ENCODE measurements at regions of chr13 and their contacts with region 1.

Region 1: GRCh38 chr13:95479731-95480130 is 72.8 kb upstream of the CLDN10 start:
- DNase-seq: no peak
- H3K4me3 ChIP-seq: no peak overlapping the region
- H3K27ac ChIP-seq: no peak overlapping the region
- H3K4me1 ChIP-seq: peaks cover 0 to 7% (median 2%) of the 10 kb centered on the region in 4 donors
- H3K27me3 ChIP-seq: no peaks in the 10 kb centered on the region
- CTCF ChIP-seq: no peak
- EP300 ChIP-seq: no peak
- POLR2A ChIP-seq: no peak

Region 2: GRCh38 chr13:94435604-94436226 is 1044.0 kb before region 1 on chr13:
- intact Hi-C with region 1: loop called (anchors 5 kb)
- DNase-seq: no peak
- H3K4me3 ChIP-seq: no peak overlapping the region
- H3K27ac ChIP-seq: no peak overlapping the region
- H3K4me1 ChIP-seq: no peaks in the 10 kb centered on the region
- H3K27me3 ChIP-seq: no peaks in the 10 kb centered on the region
- CTCF ChIP-seq: peak; percentile 14 to 57 (median 48)
- EP300 ChIP-seq: no peak
- POLR2A ChIP-seq: no peak

Region 3: DNA sequence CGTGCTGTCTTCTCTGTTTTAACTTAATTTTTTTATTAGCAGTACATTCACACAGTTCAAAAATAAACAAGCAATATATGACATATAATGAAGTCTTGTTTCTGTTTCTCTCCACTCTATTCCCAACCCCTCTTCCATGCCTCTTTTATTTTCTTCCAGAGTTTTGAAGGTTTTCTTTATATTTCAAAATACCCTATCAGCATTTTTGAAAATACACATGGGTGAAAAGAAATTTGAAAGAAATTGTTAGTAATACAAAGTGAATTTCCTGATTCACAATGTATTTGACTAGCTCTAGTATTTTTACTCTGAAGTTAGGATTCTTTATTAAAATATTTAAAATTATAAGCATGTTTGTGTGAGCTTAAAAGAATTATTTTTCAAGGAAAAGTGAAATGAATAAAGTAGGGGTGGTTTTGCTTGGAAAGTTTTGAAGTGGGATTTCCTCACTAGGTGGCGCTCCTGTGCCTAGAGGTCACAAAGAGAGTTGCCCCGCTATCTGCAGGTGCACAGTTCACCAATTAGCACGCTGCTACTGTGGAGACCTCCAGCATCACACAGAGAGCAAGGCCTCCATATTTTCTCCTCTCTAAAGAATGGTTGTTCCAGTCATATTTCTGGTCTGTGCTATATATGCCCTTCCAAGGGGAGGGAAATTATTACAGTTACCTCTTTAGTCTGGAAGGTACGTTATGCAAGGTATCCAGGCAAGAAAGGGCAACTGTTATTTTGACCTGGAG is 805.0 kb before region 1 on chr13:
- intact Hi-C with region 1: loop called (anchors 2 kb)
- DNase-seq: no peak
- H3K4me3 ChIP-seq: no peak overlapping the region
- H3K27ac ChIP-seq: no peak overlapping the region
- H3K4me1 ChIP-seq: no peaks in the 10 kb centered on the region
- H3K27me3 ChIP-seq: no peaks in the 10 kb centered on the region
- CTCF ChIP-seq: peak in 2 of 4 experiments; percentile 22 to 37
- EP300 ChIP-seq: no peak
- POLR2A ChIP-seq: no peak

Region 4: GRCh38 chr13:95039415-95039814 is 440.3 kb before region 1 on chr13:
- intact Hi-C with region 1: no loop called
- DNase-seq: no peak
- H3K4me3 ChIP-seq: no peak overlapping the region
- H3K27ac ChIP-seq: no peak overlapping the region
- H3K4me1 ChIP-seq: no peaks in the 10 kb centered on the region
- H3K27me3 ChIP-seq: no peaks in the 10 kb centered on the region
- CTCF ChIP-seq: no peak
- EP300 ChIP-seq: no peak
- POLR2A ChIP-seq: no peak

Region 5: GRCh38 chr13:95191821-95192563 is 287.7 kb before region 1 on chr13:
- intact Hi-C with region 1: loop called (anchors 2 kb)
- DNase-seq: peak; percentile 87
- H3K4me3 ChIP-seq: no peak overlapping the region
- H3K27ac ChIP-seq: no peak overlapping the region
- H3K4me1 ChIP-seq: no peaks in the 10 kb centered on the region
- H3K27me3 ChIP-seq: no peaks in the 10 kb centered on the region
- CTCF ChIP-seq: peak; percentile 57 to 78 (median 71)
- EP300 ChIP-seq: no peak
- POLR2A ChIP-seq: no peak

Region 6: GRCh38 chr13:95301183-95301967 is 178.4 kb before region 1 on chr13 and contains the start of gene ABCC4:
- intact Hi-C with region 1: loop called (anchors 10 kb)
- DNase-seq: peak; percentile 88
- H3K4me3 ChIP-seq: peak within 1 kb of the TSS; percentile 62 to 96 (median 87)
- H3K27ac ChIP-seq: peak within 1 kb of the TSS; percentile 71 to 85 (median 83)
- H3K4me1 ChIP-seq: peaks cover 0 to 44% (median 23%) of the 10 kb centered on the region in 4 donors
- H3K27me3 ChIP-seq: no peaks in the 10 kb centered on the region
- CTCF ChIP-seq: no peak
- EP300 ChIP-seq: no peak
- POLR2A ChIP-seq: no peak
- total RNA-seq, gene ABCC4: 24.3 to 56.3 (median 43.1) TPM

Region 7: GRCh38 chr13:95403828-95404522 is 75.8 kb before region 1 on chr13:
- intact Hi-C with region 1: loop called (anchors 5 kb)
- DNase-seq: peak; percentile 91
- H3K4me3 ChIP-seq: peak overlapping the region in 3 of 4 donors; percentile 26 to 39 (median 35)
- H3K27ac ChIP-seq: no peak overlapping the region
- H3K4me1 ChIP-seq: peaks cover 0 to 9% (median 6%) of the 10 kb centered on the region in 4 donors
- H3K27me3 ChIP-seq: no peaks in the 10 kb centered on the region
- CTCF ChIP-seq: peak; percentile 87 to 94 (median 94)
- EP300 ChIP-seq: no peak
- POLR2A ChIP-seq: no peak

Region 8: DNA sequence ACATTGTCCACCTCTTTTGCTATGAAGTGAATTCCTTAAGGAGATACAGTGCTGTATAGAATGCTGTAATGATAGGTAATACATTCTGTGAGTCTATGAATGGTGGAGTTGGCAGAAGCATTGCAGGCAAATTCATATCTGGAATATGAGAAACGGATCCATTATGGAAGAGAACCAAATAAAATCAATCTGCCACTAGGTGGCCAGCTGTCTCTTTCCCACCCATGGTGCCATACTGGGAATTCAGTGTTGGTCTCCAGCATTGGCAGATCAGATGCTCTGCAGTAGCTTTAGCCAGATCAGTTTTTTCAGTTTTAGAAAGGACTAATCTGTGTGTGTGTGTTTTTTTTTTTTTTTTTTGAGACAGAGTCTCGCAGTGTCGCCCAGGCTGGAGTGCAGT is 224.8 kb after region 1 on chr13:
- intact Hi-C with region 1: no loop called
- DNase-seq: no peak
- H3K4me3 ChIP-seq: no peak overlapping the region
- H3K27ac ChIP-seq: no peak overlapping the region
- H3K4me1 ChIP-seq: peaks cover 0 to 35% (median 12%) of the 10 kb centered on the region in 4 donors
- H3K27me3 ChIP-seq: no peaks in the 10 kb centered on the region
- CTCF ChIP-seq: no peak
- EP300 ChIP-seq: no peak
- POLR2A ChIP-seq: no peak

Measured in sigmoid colon (tissue), 7 donors.